SK-N-SH (cell line): ENCODE measurements at regions of chr12 and their contacts with region 1.

Region 1: GRCh38 chr12:106984588-106985137 is 2.3 kb downstream of the MTERF2 start:
- DNase-seq: no peak
- H3K4me3 ChIP-seq: no peak overlapping the region
- H3K27ac ChIP-seq: no peak overlapping the region
- H3K4me1 ChIP-seq: peaks cover 6 to 13% of the 10 kb centered on the region in 2 experiments; a peak in 2 of 4 replicates
- H3K27me3 ChIP-seq: no peaks in the 10 kb centered on the region
- CTCF ChIP-seq: no peak
- EP300 ChIP-seq: no peak
- RAD21 ChIP-seq: no peak

Region 2: DNA sequence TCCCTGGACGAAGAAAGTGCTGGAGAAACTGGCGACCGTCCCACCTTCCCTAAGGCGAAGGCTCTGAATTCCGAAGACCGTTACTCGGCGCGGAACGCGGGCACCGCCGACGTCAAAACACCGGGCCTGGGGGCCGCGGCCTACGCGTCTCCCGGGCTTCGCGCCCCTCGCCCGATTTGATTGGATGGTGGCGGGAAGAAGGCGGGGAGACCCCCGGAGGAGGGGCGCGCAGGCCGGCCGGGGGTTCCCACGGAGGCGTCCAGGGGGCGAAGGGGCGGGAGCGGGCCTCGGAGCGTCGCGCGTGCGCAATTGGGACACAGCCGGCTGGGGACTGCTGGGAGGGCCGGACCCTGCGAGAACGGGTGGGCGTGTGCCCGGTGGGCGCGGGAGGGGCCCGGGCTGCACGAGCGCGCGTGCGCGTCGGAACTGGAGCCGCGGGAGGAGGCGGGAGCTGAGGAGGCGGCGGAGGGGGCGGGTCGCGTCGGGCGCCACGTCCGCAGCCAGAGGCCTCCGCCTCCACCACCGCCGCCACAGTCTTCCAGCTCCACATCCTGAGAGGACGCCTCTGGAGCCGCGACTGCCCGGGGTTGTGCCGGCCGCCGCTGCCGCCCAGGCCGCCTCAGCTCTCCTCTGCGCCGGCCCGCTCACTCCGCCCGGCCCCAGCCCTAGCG is 29.2 kb before region 1 on chr12 and contains the start of gene TMEM263:
- CTCF ChIA-PET with region 1: interaction called, 5 read pairs
- POLR2A ChIA-PET with region 1: interaction called, 11 read pairs
- DNase-seq: peak; percentile 100
- H3K4me3 ChIP-seq: peak within 1 kb of the TSS; percentile 66 to 97
- H3K27ac ChIP-seq: peak within 1 kb of the TSS; percentile 92 to 97
- H3K4me1 ChIP-seq: peaks cover 9% of the 10 kb centered on the region in 2 experiments; a peak in 2 of 4 replicates
- H3K27me3 ChIP-seq: no peaks in the 10 kb centered on the region
- CTCF ChIP-seq: no peak
- EP300 ChIP-seq: peak in 1 of 2 experiments; percentile 25; a peak in 1 of 4 replicates
- RAD21 ChIP-seq: no peak
- polyA plus RNA-seq, gene TMEM263: 16.9 and 21.4 TPM in 2 replicates